Transverse colon (tissue), 4 donors: ENCODE measurements at regions of chrX and their contacts with region 1.

Region 1: GRCh38 chrX:68978258-68979054 is 149.6 kb downstream of the EFNB1 start:
- DNase-seq: no peak
- H3K4me3 ChIP-seq: no peak overlapping the region
- H3K27ac ChIP-seq: no peak overlapping the region
- H3K4me1 ChIP-seq: peaks cover 0 to 7% (median 0%) of the 10 kb centered on the region in 4 donors
- H3K27me3 ChIP-seq: no peaks in the 10 kb centered on the region
- CTCF ChIP-seq: no peak
- EP300 ChIP-seq: no peak
- POLR2A ChIP-seq: no peak

Region 2: DNA sequence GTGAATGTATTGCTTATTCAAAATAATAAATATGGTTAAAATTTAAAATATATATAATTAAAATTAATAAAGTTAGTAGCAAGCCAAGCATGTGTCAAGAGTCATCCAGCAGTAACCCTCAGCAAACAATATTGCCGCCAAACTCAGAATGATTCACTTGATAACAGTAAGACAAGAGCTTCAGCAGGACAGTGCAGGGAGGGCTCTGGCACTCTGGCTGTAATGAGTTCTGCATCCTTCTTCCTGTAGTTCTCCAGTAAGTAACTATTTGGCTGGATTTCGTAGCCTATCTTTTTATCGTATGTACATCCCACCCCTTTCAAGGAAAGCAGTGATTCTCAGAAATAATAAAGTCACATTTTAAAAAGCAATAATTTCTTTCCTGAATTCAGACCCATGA is 1101.4 kb after region 1 on chrX:
- in situ Hi-C with region 1: no loop called
- intact Hi-C with region 1: loop called (anchors 5 kb)
- DNase-seq: no peak
- H3K4me3 ChIP-seq: no peak overlapping the region
- H3K27ac ChIP-seq: no peak overlapping the region
- H3K4me1 ChIP-seq: no peaks in the 10 kb centered on the region
- H3K27me3 ChIP-seq: no peaks in the 10 kb centered on the region
- CTCF ChIP-seq: no peak
- EP300 ChIP-seq: no peak
- POLR2A ChIP-seq: no peak